SK-N-SH (cell line): ENCODE measurements at regions of chr11 and their contacts with region 1.

Region 1: GRCh38 chr11:783581-784015 is 6.3 kb downstream of the CEND1 start:
- DNase-seq: peak; percentile 91
- H3K4me3 ChIP-seq: peak overlapping the region in 1 of 2 experiments; percentile 17; a peak in 1 of 4 replicates
- H3K27ac ChIP-seq: peak overlapping the region; percentile 4 to 75; a peak in 3 of 4 replicates
- H3K4me1 ChIP-seq: peaks cover 9 to 10% of the 10 kb centered on the region in 2 experiments; a peak in 3 of 4 replicates
- H3K27me3 ChIP-seq: no peaks in the 10 kb centered on the region
- CTCF ChIP-seq: peak; percentile 84
- EP300 ChIP-seq: peak in 1 of 2 experiments; percentile 29; a peak in 1 of 4 replicates
- RAD21 ChIP-seq: peak; percentile 62

Region 2: GRCh38 chr11:771617-772204 is 11.9 kb before region 1 on chr11:
- CTCF ChIA-PET with region 1: interaction called, 10 read pairs
- POLR2A ChIA-PET with region 1: interaction called, 18 read pairs
- DNase-seq: no peak
- H3K4me3 ChIP-seq: no peak overlapping the region
- H3K27ac ChIP-seq: no peak overlapping the region
- H3K4me1 ChIP-seq: peaks cover 11 to 13% of the 10 kb centered on the region in 2 experiments; a peak in 2 of 4 replicates
- H3K27me3 ChIP-seq: no peaks in the 10 kb centered on the region
- CTCF ChIP-seq: no peak
- EP300 ChIP-seq: no peak
- RAD21 ChIP-seq: no peak

Region 3: GRCh38 chr11:798093-798713 is 14.6 kb after region 1 on chr11 and contains the start of gene SLC25A22:
- CTCF ChIA-PET with region 1: interaction called, 43 read pairs
- POLR2A ChIA-PET with region 1: no interaction called
- DNase-seq: peak; percentile 98
- H3K4me3 ChIP-seq: peak within 1 kb of the TSS; percentile 90 to 92
- H3K27ac ChIP-seq: peak within 1 kb of the TSS; percentile 93
- H3K4me1 ChIP-seq: peaks cover 8 to 40% of the 10 kb centered on the region in 2 experiments; a peak in 2 of 4 replicates
- H3K27me3 ChIP-seq: no peaks in the 10 kb centered on the region
- CTCF ChIP-seq: peak; percentile 61
- EP300 ChIP-seq: no peak
- RAD21 ChIP-seq: peak; percentile 49
- polyA plus RNA-seq, gene SLC25A22: 40.2 and 50.9 TPM in 2 replicates

Region 4: GRCh38 chr11:803770-804598 is 20.4 kb after region 1 on chr11:
- CTCF ChIA-PET with region 1: interaction called, 13 read pairs
- POLR2A ChIA-PET with region 1: no interaction called
- DNase-seq: peak; percentile 65
- H3K4me3 ChIP-seq: peak overlapping the region; percentile 62 to 72
- H3K27ac ChIP-seq: peak overlapping the region in 1 of 2 experiments; percentile 78; a peak in 2 of 4 replicates
- H3K4me1 ChIP-seq: peaks cover 14 to 18% of the 10 kb centered on the region in 2 experiments; a peak in 2 of 4 replicates
- H3K27me3 ChIP-seq: no peaks in the 10 kb centered on the region
- CTCF ChIP-seq: no peak
- EP300 ChIP-seq: no peak
- RAD21 ChIP-seq: no peak

Region 5: GRCh38 chr11:898143-898511 is 114.5 kb after region 1 on chr11:
- CTCF ChIA-PET with region 1: no interaction called
- POLR2A ChIA-PET with region 1: no interaction called
- DNase-seq: peak; percentile 70
- H3K4me3 ChIP-seq: no peak overlapping the region
- H3K27ac ChIP-seq: no peak overlapping the region
- H3K4me1 ChIP-seq: no peaks in the 10 kb centered on the region
- H3K27me3 ChIP-seq: no peaks in the 10 kb centered on the region
- CTCF ChIP-seq: peak; percentile 48
- EP300 ChIP-seq: no peak
- RAD21 ChIP-seq: peak; percentile 62

Region 6: DNA sequence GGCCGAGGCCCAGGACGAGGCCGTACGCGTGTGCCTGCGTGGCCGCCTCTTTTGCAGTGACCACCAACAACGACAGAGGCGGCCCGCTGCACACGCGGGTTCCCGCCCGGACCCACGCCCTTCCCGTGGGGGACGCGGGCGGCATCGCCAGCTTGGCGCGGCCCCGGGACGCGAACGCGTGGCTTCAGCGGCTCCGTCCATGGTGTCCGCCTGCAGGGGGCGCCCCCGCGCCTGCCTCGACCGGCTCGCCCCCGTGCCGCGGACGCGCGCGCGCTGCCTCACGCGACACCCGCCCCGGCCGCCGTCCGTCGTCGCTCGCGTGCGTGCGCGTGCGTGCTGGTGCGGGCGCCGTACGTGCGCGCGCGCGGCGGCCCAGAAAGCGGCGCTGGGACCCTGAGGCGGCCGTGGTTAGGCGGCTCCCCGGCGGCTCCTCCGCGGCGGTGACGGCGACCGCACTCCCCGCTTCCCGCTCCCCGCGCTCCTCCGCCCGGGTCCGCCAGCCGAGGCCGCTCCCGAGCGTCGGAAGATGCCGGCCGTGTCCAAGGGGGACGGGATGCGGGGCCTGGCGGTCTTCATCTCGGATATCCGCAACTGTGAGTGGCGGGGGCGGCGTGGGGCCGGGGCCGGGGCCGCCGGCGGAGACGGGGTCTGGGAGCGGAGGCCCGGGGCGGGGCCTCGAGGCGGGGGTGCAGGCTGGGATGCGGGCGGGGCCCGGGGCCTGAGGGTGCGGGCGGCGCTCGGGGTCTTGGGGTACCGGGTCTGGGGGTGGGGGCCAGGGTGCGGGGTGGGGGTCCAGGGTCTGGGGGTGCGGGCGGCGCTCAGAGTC is 142.1 kb after region 1 on chr11 and contains the start of gene AP2A2:
- CTCF ChIA-PET with region 1: no interaction called
- POLR2A ChIA-PET with region 1: no interaction called
- DNase-seq: peak; percentile 99
- H3K4me3 ChIP-seq: peak within 1 kb of the TSS; percentile 69 to 82
- H3K27ac ChIP-seq: peak within 1 kb of the TSS; percentile 64 to 92; a peak in 3 of 4 replicates
- H3K4me1 ChIP-seq: peaks cover 0 to 31% of the 10 kb centered on the region in 2 experiments; a peak in 1 of 4 replicates
- H3K27me3 ChIP-seq: no peaks in the 10 kb centered on the region
- CTCF ChIP-seq: peak; percentile 60
- EP300 ChIP-seq: no peak
- RAD21 ChIP-seq: peak; percentile 25; the same call in 1 of the 2 replicates
- polyA plus RNA-seq, gene AP2A2: 36.3 and 42.7 TPM in 2 replicates